ENCODE measurements at regions of chr7 and their contacts with region 1.

Region 1: DNA sequence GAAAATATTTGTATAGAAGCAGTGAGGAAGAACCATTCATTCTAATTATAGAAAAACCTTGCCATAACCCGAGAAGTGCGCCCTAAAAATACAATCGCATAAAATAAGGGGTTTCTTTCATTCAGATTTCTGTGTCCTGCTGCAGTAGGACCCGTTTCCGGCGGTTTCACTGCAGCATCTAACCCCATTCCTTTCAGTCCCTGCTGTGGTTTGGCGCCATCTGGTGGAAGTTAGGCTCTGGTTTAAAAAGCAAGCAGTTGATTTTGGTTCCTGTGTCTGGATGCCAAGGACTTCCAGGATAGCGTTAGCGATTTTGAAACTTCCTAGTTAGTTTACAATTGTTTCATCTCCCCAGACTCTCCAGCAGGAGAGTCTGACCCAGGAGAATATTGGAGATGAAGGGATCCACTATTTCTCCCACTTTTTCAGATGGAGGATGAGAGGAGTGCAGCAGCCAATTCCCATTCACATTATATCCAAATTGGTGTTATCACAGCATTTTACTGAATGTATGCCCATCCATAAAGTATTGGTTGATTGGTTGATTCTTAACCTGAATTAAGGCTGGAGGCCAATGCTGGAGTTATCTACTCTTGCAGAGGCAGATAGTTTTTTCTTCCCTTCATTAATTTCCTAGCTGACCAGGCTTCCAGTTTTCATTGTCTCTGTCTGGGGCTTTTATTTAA is 128.8 kb upstream of the CACNA2D1 start:
- DNase-seq: peak; percentile 80
- ATAC-seq: peak; percentile 96
- H3K4me3 ChIP-seq: peak overlapping the region in 1 of 2 experiments; percentile 25; a peak in 2 of 4 replicates
- H3K27ac ChIP-seq: no peak overlapping the region
- H3K4me1 ChIP-seq: no peaks in the 10 kb centered on the region
- H3K27me3 ChIP-seq: no peaks in the 10 kb centered on the region
- CTCF ChIP-seq: peak; percentile 93

Region 2: GRCh38 chr7:82172017-82172416 is 400.3 kb before region 1 on chr7:
- CTCF ChIA-PET with region 1: no interaction called
- POLR2A ChIA-PET with region 1: no interaction called
- in situ Hi-C with region 1: no loop called
- intact Hi-C with region 1: loop called (anchors 5 kb)
- DNase-seq: no peak
- ATAC-seq: no peak
- H3K4me3 ChIP-seq: no peak overlapping the region
- H3K27ac ChIP-seq: no peak overlapping the region
- H3K4me1 ChIP-seq: no peaks in the 10 kb centered on the region
- H3K27me3 ChIP-seq: no peaks in the 10 kb centered on the region
- CTCF ChIP-seq: peak; percentile 39; the same call in 1 of the 2 replicates

Region 3: DNA sequence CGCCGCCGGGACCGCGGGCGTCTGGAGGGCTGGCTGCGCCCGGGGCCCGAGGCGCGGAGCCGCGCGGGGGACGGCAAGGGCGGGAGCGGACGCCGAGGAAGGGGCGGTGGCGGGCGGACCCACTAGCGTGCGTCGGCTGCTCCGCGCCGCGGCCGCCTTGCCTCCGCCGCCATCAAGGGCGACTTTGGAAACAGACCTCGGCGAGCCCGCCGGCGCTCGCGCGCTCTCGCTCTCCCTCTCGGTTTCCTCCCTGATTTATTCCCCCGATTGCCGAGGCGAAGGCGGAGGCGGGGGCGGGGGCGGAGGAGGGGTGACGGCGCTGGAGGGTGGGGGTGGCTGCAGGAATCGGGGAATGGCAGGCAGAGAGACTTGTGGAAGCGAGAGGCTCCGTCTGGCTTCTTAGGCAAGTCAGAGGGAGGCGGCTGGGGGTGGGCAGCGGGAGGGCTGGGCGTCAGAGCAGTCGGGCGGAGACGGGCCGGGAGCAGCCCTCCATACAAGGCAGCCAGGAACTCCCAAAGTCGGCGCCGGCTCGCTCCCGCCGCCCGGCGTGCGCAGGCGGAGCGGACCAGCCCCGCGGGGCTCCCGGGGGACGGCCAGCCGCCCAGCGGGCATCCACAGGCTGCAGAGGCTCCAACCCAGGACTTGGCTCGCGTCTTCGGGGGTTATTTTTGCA is 128.7 kb before region 1 on chr7 and contains the start of gene CACNA2D1:
- CTCF ChIA-PET with region 1: no interaction called
- POLR2A ChIA-PET with region 1: no interaction called
- in situ Hi-C with region 1: no loop called
- intact Hi-C with region 1: loop called (anchors 10 kb)
- DNase-seq: no peak
- ATAC-seq: peak; percentile 91
- H3K4me3 ChIP-seq: peak within 1 kb of the TSS; percentile 60 to 79
- H3K27ac ChIP-seq: no peak within 1 kb of the TSS
- H3K4me1 ChIP-seq: no peaks in the 10 kb centered on the region
- H3K27me3 ChIP-seq: peaks cover 28% of the 10 kb centered on the region
- CTCF ChIP-seq: no peak
- total RNA-seq, gene CACNA2D1: 9.8 TPM

Region 4: GRCh38 chr7:82549616-82550285 is 22.6 kb before region 1 on chr7:
- CTCF ChIA-PET with region 1: no interaction called
- POLR2A ChIA-PET with region 1: no interaction called
- in situ Hi-C with region 1: no loop called
- intact Hi-C with region 1: loop called (anchors 2 kb)
- DNase-seq: no peak
- ATAC-seq: no peak
- H3K4me3 ChIP-seq: no peak overlapping the region
- H3K27ac ChIP-seq: no peak overlapping the region
- H3K4me1 ChIP-seq: no peaks in the 10 kb centered on the region
- H3K27me3 ChIP-seq: no peaks in the 10 kb centered on the region
- CTCF ChIP-seq: no peak

Measured in Panc1 (cell line).